GM12878 (cell line): ENCODE measurements at regions of chr7 and their contacts with region 1.

Region 1: DNA sequence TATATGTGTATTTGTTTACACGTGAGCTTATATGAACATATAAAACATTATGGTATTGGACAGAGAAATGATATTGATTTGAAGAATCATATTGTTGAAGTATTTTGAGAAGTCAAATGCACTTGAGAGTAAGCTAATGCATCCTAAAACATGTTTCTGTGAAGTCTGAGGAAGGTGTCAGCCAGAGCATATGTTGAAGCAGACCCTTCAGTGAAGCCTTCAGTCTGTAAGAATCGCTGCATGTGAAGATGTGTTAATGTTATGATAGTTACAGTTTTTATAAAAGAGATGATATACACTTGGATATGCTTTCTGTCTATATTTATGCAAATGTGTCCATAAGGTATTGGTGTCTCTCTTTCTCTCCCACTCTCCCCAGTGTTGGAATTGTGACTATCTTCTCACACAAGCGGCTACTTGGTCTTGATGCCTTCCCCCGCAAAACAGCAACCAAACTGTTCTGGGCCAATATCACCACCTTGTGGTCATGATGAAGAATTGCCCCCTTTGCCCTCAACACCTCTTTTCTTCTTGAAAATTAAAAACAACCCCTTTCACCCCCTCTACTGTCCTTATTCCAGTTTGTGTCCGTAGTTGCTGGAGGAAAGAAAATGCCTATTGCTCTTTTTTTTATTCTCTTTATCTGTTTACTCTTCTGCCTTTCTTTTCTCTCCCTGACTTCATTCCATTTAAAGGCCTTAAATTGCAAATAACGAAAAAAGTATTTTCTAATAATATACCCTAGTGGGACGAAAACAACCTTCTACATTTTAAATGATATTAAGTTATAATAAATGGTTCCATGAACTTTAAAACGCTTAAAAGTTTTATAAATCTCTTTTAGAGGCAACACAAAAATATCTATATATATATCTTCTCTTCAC is 64.9 kb downstream of the IKZF1 start:
- DNase-seq: peak; percentile 51
- ATAC-seq: peak; percentile 77
- H3K4me3 ChIP-seq: no peak overlapping the region
- H3K27ac ChIP-seq: peak overlapping the region; percentile 17; the same call in 1 of the 2 replicates
- H3K4me1 ChIP-seq: peaks cover 23% of the 10 kb centered on the region
- H3K27me3 ChIP-seq: no peaks in the 10 kb centered on the region
- CTCF ChIP-seq: peak; percentile 70 to 82 (median 81)
- EP300 ChIP-seq: no peak
- POLR2A ChIP-seq: no peak
- RAD21 ChIP-seq: peak; percentile 96

Region 2: DNA sequence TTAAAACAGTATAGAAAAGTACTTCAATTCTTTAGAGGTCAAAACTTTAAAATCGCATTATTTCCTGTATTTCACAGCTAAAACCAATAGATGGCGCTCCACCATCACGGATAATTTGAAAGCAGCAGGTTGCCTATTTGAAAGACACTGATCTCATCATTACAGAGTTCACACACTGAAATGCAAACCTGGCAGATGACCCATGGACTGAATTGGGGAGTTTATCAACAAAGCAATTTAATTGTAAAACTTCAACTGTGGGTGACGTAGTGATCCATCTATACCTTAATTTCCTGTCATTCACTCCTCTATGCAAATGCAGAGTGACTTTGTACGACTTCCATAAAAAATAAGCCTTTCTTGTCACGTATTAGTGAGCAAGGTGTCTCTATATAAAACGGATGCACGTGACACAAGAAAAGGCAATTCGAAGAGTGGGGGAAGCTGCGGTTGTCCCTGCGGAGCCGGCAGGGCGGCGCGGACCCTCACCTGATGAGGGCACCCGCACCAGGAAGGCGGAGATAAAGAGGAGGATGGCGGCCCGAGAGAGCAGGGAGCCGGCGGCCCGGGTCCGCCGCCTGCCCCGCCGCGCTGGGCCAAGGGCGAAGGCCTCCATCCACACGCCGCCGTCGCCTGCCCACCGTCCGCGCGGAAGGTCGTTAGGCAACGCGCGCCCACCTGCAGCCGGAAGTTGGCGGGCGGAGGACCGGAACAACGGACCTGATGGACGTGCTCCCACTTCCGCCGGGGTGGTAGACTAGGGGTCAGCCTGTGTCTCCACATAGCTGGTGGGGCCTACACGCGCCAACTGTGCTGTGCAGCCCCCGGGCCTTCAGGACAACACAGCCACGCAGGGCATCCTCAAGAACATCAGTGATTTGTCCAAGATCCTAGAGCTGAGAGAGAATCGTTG is 276.6 kb before region 1 on chr7 and contains the start of gene ZPBP:
- CTCF ChIA-PET with region 1: interaction called, 8 read pairs
- POLR2A ChIA-PET with region 1: no interaction called
- RAD21 ChIA-PET with region 1: interaction called, 11 read pairs
- SMC1A ChIA-PET with region 1: interaction called, 8 read pairs
- in situ Hi-C with region 1: no loop called
- intact Hi-C with region 1: no loop called
- DNase-seq: peak; percentile 30
- ATAC-seq: peak; percentile 77
- H3K4me3 ChIP-seq: peak within 1 kb of the TSS; percentile 38; the same call in 1 of the 2 replicates
- H3K27ac ChIP-seq: no peak within 1 kb of the TSS
- H3K4me1 ChIP-seq: no peaks in the 10 kb centered on the region
- H3K27me3 ChIP-seq: no peaks in the 10 kb centered on the region
- CTCF ChIP-seq: peak; percentile 54 to 72 (median 68); a peak in 5 of 6 replicates
- EP300 ChIP-seq: no peak
- POLR2A ChIP-seq: peak; percentile 58
- RAD21 ChIP-seq: peak; percentile 95
- polyA plus RNA-seq, gene ZPBP: not detected

Region 3: GRCh38 chr7:50147951-50148808 is 221.2 kb before region 1 on chr7:
- CTCF ChIA-PET with region 1: interaction called, 96 read pairs
- POLR2A ChIA-PET with region 1: no interaction called
- RAD21 ChIA-PET with region 1: interaction called, 37 read pairs
- SMC1A ChIA-PET with region 1: interaction called, 102 read pairs
- in situ Hi-C with region 1: no loop called
- intact Hi-C with region 1: no loop called
- DNase-seq: peak; percentile 76
- ATAC-seq: peak; percentile 70
- H3K4me3 ChIP-seq: no peak overlapping the region
- H3K27ac ChIP-seq: peak overlapping the region; percentile 59
- H3K4me1 ChIP-seq: peaks cover 46% of the 10 kb centered on the region
- H3K27me3 ChIP-seq: no peaks in the 10 kb centered on the region
- CTCF ChIP-seq: no peak
- EP300 ChIP-seq: peak; percentile 52 to 85; a peak in 3 of 4 replicates
- POLR2A ChIP-seq: no peak
- RAD21 ChIP-seq: no peak

Region 4: DNA sequence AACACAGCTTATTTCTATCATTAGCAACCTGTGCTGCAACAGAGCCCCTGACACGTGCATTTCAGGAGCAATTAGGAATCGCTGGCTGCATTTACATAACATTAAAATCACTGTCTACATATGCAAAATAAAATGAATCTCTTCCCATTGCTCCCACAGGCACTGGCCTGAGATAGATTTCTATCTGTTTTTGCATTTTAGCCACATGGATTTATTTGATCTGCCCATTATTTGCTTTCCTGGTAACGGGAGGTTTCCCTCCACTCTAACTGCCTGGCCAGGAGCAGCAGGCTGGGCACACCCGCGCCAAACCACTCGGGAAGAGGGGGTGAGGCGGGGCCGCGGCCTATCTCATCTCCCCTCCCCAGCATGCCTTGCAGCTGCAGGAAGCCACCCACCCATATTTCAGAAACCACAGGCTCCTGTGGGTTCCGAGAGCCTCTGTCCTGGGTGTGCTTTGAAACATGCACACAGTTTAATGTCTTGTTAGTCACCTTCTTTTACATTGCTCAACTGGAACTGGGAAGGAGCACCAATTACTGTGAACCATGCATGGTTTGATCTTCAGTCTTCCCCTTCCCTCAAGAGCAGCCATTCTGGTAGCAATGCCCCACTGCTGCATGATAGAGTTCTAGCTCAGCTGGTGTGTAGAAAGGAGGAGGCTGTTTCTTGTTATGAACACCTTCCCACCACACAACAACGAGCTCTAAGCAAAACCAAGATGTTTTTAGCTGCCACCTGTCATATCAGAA is 102.6 kb before region 1 on chr7:
- CTCF ChIA-PET with region 1: interaction called, 43 read pairs
- POLR2A ChIA-PET with region 1: interaction called, 3 read pairs
- RAD21 ChIA-PET with region 1: interaction called, 38 read pairs
- SMC1A ChIA-PET with region 1: interaction called, 67 read pairs
- in situ Hi-C with region 1: no loop called
- intact Hi-C with region 1: no loop called
- DNase-seq: peak; percentile 84
- ATAC-seq: peak; percentile 56
- H3K4me3 ChIP-seq: peak overlapping the region; percentile 31; the same call in 1 of the 2 replicates
- H3K27ac ChIP-seq: peak overlapping the region; percentile 77
- H3K4me1 ChIP-seq: peaks cover 87% of the 10 kb centered on the region
- H3K27me3 ChIP-seq: no peaks in the 10 kb centered on the region
- CTCF ChIP-seq: no peak
- EP300 ChIP-seq: peak in 1 of 2 experiments; percentile 38; a peak in 1 of 4 replicates
- POLR2A ChIP-seq: peak; percentile 27; the same call in 1 of the 2 replicates
- RAD21 ChIP-seq: no peak

Region 5: GRCh38 chr7:50317221-50317678 is 52.1 kb before region 1 on chr7:
- CTCF ChIA-PET with region 1: interaction called, 59 read pairs
- POLR2A ChIA-PET with region 1: interaction called, 3 read pairs
- RAD21 ChIA-PET with region 1: interaction called, 61 read pairs
- SMC1A ChIA-PET with region 1: interaction called, 29 read pairs
- in situ Hi-C with region 1: no loop called
- intact Hi-C with region 1: no loop called
- DNase-seq: no peak
- ATAC-seq: peak; percentile 82
- H3K4me3 ChIP-seq: no peak overlapping the region
- H3K27ac ChIP-seq: peak overlapping the region; percentile 66; the same call in 1 of the 2 replicates
- H3K4me1 ChIP-seq: peaks cover 47% of the 10 kb centered on the region
- H3K27me3 ChIP-seq: no peaks in the 10 kb centered on the region
- CTCF ChIP-seq: no peak; a peak in 1 of 6 replicates
- EP300 ChIP-seq: no peak
- POLR2A ChIP-seq: no peak
- RAD21 ChIP-seq: no peak

Region 6: GRCh38 chr7:50349963-50350944 is 19.1 kb before region 1 on chr7:
- CTCF ChIA-PET with region 1: interaction called, 50 read pairs
- POLR2A ChIA-PET with region 1: interaction called, 4 read pairs
- RAD21 ChIA-PET with region 1: interaction called, 41 read pairs
- SMC1A ChIA-PET with region 1: interaction called, 69 read pairs
- in situ Hi-C with region 1: no loop called
- intact Hi-C with region 1: no loop called
- DNase-seq: peak; percentile 84
- ATAC-seq: peak; percentile 90
- H3K4me3 ChIP-seq: no peak overlapping the region
- H3K27ac ChIP-seq: peak overlapping the region; percentile 86
- H3K4me1 ChIP-seq: peaks cover 31% of the 10 kb centered on the region
- H3K27me3 ChIP-seq: no peaks in the 10 kb centered on the region
- CTCF ChIP-seq: no peak
- EP300 ChIP-seq: peak; percentile 78 to 84
- POLR2A ChIP-seq: peak; percentile 44; the same call in 1 of the 2 replicates
- RAD21 ChIP-seq: 0 out of 2 replicates have a peak, but pooled peaks have one; percentile 24

Region 7: DNA sequence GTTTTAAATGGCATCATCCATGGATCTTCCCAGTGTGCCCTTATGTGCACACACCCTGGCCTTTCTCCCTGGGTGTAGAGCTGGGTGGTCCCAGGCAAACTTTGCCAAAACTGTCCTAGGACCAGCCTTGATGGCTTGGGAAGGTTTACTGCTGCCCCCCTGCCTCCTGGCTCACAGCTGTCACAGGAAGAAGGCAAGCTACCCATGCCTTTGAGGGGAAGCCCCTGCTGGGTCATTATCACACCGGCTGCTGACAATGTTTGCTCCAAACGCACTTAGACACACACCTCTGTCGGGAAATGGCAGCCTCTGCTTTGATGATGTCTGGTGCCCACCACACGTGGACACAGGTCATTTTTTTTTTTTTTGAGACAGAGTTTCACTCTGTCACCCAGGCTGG is 106.0 kb after region 1 on chr7:
- CTCF ChIA-PET with region 1: no interaction called
- POLR2A ChIA-PET with region 1: no interaction called
- RAD21 ChIA-PET with region 1: no interaction called
- SMC1A ChIA-PET with region 1: no interaction called
- in situ Hi-C with region 1: no loop called
- intact Hi-C with region 1: no loop called
- DNase-seq: no peak
- ATAC-seq: peak; percentile 76
- H3K4me3 ChIP-seq: no peak overlapping the region
- H3K27ac ChIP-seq: no peak overlapping the region
- H3K4me1 ChIP-seq: no peaks in the 10 kb centered on the region
- H3K27me3 ChIP-seq: peaks cover 0 to 2% of the 10 kb centered on the region in 2 experiments; a peak in 3 of 4 replicates
- CTCF ChIP-seq: no peak
- EP300 ChIP-seq: no peak
- POLR2A ChIP-seq: no peak
- RAD21 ChIP-seq: no peak

Region 8: DNA sequence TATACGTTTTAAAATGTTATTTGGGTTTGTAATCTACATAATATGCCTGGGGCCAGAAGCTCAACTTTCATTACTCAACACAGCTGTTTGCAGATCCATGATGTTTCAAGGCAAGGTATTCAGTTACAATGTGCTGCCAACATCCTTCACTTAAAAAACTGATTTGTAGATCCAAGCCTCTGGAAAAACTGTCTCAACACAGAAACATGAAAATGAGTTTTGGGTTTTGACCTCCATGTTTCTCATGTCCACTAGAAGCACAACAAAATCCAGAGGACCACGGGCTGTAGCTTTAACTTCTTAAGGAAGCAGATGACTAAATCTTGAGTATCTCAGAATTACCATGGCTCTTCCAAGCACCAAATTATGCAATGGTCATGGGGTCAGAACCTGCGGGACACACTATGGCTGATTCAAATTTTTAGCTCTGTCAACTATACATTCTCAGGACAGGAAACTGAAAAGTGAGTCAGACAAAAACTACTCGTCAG is 660.4 kb after region 1 on chr7:
- CTCF ChIA-PET with region 1: no interaction called
- POLR2A ChIA-PET with region 1: no interaction called
- RAD21 ChIA-PET with region 1: no interaction called
- SMC1A ChIA-PET with region 1: no interaction called
- in situ Hi-C with region 1: no loop called
- intact Hi-C with region 1: no loop called
- DNase-seq: no peak
- ATAC-seq: no peak
- H3K4me3 ChIP-seq: no peak overlapping the region
- H3K27ac ChIP-seq: no peak overlapping the region
- H3K4me1 ChIP-seq: no peaks in the 10 kb centered on the region
- H3K27me3 ChIP-seq: 0 out of 4 replicates have a peak, but pooled peaks cover 0 to 1% of the 10 kb centered on the region in 2 experiments
- CTCF ChIP-seq: no peak
- EP300 ChIP-seq: no peak
- POLR2A ChIP-seq: no peak
- RAD21 ChIP-seq: no peak